Activated CD4-positive, alpha-beta T cell treated with anti-CD3 and anti-CD28 coated beads for 36 hours (primary cell): ENCODE measurements at regions of chr7 and their contacts with region 1.

Region 1: GRCh38 chr7:584122-584465 is 64.4 kb upstream of the PDGFA start:
- DNase-seq: peak; percentile 95
- ATAC-seq: peak; percentile 90
- H3K4me3 Mint-ChIP-seq: peak overlapping the region; percentile 77
- H3K27ac Mint-ChIP-seq: peak overlapping the region; percentile 96
- H3K4me1 Mint-ChIP-seq: peaks cover 37% of the 10 kb centered on the region
- H3K27me3 Mint-ChIP-seq: no peaks in the 10 kb centered on the region

Region 2: DNA sequence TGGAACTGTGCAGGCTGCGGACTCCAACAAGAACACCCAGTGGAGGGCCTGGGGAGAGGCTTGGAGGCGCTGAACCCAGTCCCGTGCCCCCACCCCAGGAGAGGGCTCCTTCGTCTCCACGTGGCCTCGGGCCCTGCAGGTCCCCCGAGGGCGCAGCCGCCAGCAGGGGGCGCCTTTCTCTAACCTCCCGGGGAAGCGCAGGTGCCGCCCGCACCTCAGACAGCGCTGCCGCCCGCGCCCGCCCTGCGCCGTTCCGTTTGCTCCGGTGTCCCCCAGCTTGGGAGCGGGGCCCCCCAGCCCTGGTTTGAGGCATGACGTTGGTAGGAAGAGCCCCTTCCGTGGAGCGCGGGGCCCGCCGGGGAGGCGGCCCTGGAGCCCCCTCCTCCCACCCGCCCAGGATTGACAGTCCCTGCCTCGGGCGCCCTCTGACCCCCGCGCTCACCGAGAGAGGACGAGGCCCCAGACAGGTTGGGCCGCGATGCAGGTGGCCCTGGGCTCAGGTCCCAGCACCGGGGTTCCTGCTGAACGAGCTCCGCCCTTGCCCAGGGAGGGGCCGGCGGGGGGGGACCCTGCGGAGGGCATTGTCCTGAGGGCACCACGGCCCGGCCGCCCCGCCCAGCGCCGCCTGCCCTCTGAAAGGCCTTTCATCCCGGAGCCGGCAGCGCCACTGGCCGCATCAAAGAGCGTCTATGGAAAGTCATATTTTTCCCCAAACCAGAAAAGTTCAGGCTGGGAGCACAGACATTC is 251.3 kb before region 1 on chr7:
- CTCF ChIA-PET with region 1: no interaction called
- POLR2A ChIA-PET with region 1: no interaction called
- intact Hi-C with region 1: loop called in 1 of 2 experiments (anchors 5 kb)
- DNase-seq: peak; percentile 97
- ATAC-seq: peak; percentile 100
- H3K4me3 Mint-ChIP-seq: no peak overlapping the region
- H3K27ac Mint-ChIP-seq: no peak overlapping the region
- H3K4me1 Mint-ChIP-seq: peaks cover 8% of the 10 kb centered on the region
- H3K27me3 Mint-ChIP-seq: no peaks in the 10 kb centered on the region

Region 3: DNA sequence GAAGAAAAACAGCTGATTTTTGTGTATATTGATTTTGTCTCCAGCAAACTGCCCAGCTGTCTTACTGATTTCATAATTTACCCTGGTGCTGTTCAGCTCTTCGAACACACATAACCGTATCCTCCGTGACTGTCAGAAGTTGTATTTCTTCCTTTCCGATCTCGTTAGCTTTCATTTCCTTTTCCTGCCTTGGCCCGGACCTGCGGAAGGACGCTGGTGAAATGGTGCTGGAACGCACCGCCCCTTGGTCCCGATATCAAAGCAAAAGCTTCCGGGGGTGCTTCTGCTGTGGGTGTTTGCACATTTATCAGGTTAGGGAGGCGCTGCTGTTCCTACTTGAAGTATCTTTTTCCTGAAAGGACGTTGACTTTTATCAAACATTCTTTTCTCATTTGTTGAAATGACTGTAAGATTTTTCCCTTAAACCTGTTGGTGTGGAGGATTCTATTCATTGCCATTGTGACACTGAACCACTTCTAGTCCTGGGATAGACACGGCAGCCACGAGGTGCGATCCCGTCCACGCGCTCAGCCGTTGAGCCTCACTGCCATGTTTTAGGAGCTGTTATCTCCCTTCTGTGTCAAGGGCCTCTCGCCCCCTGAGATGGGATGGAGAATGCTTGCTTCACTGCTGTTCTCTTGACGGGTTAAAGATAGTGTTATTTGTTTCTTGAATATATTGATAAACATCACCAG is 221.5 kb before region 1 on chr7:
- CTCF ChIA-PET with region 1: no interaction called
- POLR2A ChIA-PET with region 1: no interaction called
- intact Hi-C with region 1: loop called in 1 of 2 experiments (anchors 2 kb)
- DNase-seq: peak; percentile 67
- ATAC-seq: peak; percentile 65
- H3K4me3 Mint-ChIP-seq: peak overlapping the region; percentile 62
- H3K27ac Mint-ChIP-seq: peak overlapping the region; percentile 90
- H3K4me1 Mint-ChIP-seq: peaks cover 67% of the 10 kb centered on the region
- H3K27me3 Mint-ChIP-seq: no peaks in the 10 kb centered on the region

Region 4: DNA sequence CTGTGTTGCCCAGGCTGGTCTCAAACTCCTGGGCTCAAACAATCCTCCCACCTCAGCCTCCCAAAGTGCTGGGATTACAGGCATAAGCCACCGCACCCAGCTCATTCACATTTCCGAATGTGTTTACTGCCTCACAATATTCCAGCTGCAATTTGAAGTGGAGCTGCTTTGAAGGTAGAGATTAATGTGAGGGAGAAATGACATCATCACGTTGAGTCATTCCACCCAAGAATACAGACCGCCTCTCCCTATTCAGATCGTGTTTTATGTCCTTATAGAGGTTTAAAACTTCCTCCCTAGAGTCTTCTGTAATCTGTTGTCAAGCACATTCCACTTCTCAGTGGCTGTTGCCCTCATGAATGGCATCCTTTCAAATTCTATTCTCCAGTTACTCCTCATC is 36.0 kb after region 1 on chr7:
- CTCF ChIA-PET with region 1: interaction called, 3 read pairs
- POLR2A ChIA-PET with region 1: no interaction called
- intact Hi-C with region 1: loop called in 1 of 2 experiments (anchors 1 kb)
- DNase-seq: no peak
- ATAC-seq: peak; percentile 52
- H3K4me3 Mint-ChIP-seq: no peak overlapping the region
- H3K27ac Mint-ChIP-seq: peak overlapping the region; percentile 100
- H3K4me1 Mint-ChIP-seq: peaks cover 54% of the 10 kb centered on the region
- H3K27me3 Mint-ChIP-seq: no peaks in the 10 kb centered on the region

Region 5: GRCh38 chr7:831596-832166 is 247.6 kb after region 1 on chr7:
- CTCF ChIA-PET with region 1: no interaction called
- POLR2A ChIA-PET with region 1: no interaction called
- intact Hi-C with region 1: loop called in 1 of 2 experiments (anchors 1 kb)
- DNase-seq: no peak
- ATAC-seq: peak; percentile 69
- H3K4me3 Mint-ChIP-seq: peak overlapping the region; percentile 63
- H3K27ac Mint-ChIP-seq: peak overlapping the region; percentile 98
- H3K4me1 Mint-ChIP-seq: peaks cover 64% of the 10 kb centered on the region
- H3K27me3 Mint-ChIP-seq: no peaks in the 10 kb centered on the region

Region 6: GRCh38 chr7:974820-975681 is 391.0 kb after region 1 on chr7 and contains the start of gene COX19:
- CTCF ChIA-PET with region 1: no interaction called
- POLR2A ChIA-PET with region 1: no interaction called
- intact Hi-C with region 1: no loop called
- DNase-seq: peak; percentile 96
- ATAC-seq: peak; percentile 93
- H3K4me3 Mint-ChIP-seq: peak within 1 kb of the TSS; percentile 94
- H3K27ac Mint-ChIP-seq: peak within 1 kb of the TSS; percentile 94
- H3K4me1 Mint-ChIP-seq: peaks cover 30% of the 10 kb centered on the region
- H3K27me3 Mint-ChIP-seq: no peaks in the 10 kb centered on the region
- total RNA-seq, gene COX19: 11.3 to 14.6 TPM